ENCODE measurements at regions of chr12 and their contacts with region 1.

Region 1: DNA sequence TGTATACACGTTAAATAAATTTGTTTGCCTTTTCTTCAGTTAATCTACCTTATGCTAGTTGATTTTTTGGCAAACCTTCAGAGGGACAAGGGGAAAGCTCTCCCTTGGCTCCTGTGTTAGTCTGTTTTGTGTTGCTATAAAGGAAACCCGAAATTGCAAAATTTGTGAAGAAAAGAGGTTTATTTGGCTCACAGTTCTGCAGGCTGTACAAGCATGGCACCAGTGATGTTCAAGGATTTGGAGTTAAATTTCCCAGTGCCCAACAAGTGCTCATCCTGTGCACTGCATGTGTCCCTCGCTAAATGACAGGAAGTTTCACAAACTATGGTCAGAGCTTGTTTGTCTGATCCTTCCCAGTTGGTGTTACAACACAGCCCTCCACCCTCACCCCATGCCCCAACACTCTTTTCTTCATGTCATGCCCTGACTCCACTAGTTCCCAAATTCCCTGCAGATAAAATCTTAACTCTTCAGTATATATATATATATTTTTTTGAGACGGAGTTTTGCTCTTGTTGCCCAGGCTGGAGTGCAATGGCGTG is 14.0 kb upstream of the RASSF3 start:
- DNase-seq: no peak
- H3K4me3 Mint-ChIP-seq: no peak overlapping the region
- H3K27ac Mint-ChIP-seq: no peak overlapping the region
- H3K4me1 Mint-ChIP-seq: peaks cover 42% of the 10 kb centered on the region
- H3K27me3 Mint-ChIP-seq: no peaks in the 10 kb centered on the region

Region 2: DNA sequence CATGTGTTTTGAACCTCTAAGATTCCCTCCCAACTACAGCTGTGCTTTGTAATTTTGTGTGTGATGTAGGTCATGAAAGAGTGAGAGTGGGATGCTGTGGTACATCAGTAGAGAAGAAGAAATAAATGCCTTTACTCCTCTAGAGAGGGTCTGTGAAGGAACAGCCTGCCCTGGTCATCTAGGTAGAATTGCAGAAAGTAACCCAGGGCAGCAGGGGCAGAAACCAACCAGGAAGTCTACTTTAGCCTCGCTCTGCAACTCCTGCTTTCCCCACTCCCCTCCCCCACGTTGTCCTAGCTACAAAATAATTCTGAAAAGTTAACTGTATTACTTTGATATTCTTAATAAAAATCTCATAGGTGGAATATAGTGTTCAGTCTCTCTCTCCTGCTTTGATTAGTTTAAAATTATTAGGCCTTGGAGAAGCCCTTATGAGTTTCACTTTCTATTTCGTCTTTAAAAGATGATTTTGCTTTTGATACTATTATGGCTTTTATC is 136.9 kb before region 1 on chr12:
- CTCF ChIA-PET with region 1: no interaction called
- intact Hi-C with region 1: loop called (anchors 5 kb)
- DNase-seq: peak; percentile 14
- H3K4me3 Mint-ChIP-seq: peak overlapping the region; percentile 72
- H3K27ac Mint-ChIP-seq: peak overlapping the region; percentile 85
- H3K4me1 Mint-ChIP-seq: peaks cover 38% of the 10 kb centered on the region
- H3K27me3 Mint-ChIP-seq: no peaks in the 10 kb centered on the region

Region 3: GRCh38 chr12:64835901-64836300 is 239.6 kb after region 1 on chr12:
- CTCF ChIA-PET with region 1: no interaction called
- intact Hi-C with region 1: no loop called
- DNase-seq: no peak
- H3K4me3 Mint-ChIP-seq: no peak overlapping the region
- H3K27ac Mint-ChIP-seq: no peak overlapping the region
- H3K4me1 Mint-ChIP-seq: no peaks in the 10 kb centered on the region
- H3K27me3 Mint-ChIP-seq: peaks cover 7% of the 10 kb centered on the region

Measured in activated naive CD4-positive, alpha-beta T cell treated with anti-CD3 and anti-CD28 coated beads for 36 hours (primary cell).